WTC11 (cell line): ENCODE measurements at regions of chr19 and their contacts with region 1.

Region 1: DNA sequence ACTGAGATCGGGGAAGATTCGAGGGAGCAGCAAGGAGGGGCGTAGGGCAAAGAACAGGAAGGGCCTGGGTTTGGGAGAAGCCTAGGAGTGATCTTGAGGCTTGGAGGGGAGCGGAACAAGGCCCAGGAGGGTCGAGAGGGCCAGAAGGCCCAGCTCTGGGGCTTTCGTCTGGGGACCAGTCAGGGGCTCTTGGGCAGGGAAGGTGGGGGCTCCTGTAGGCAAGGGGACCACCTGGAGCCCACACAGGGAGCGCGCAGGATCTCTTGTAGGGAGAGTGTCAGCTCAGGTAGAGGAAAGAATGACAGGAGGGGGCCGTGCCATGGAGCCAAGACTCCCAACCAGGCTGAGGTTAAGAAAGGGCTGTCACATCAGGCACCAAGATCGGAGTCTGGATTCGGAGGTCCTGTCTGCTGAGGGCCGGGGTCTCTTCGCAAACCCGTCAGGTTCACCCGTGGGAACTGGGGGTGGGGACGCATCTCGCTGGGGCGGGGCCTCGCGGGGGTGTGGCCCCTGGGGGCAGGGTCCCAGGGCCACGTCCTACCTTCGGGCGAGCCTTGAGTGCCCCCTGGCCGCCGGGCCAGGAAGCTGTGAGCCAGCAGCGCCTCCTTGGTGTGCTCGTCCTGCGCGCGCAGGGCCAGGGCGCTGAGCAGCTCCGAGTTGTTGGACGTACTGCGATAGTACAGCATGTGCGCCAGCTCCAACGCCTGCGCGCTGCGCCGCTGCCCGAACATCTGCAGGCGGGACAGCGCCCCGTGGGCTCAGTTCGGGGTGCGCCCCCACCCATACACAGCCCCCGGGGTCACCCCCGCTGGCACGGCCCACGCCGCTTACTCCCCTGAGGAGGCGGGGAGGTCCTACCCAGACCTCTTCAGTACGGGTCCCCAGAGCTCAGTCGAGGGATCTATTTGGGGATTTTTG is 8.4 kb downstream of the EMP3 start:
- DNase-seq: peak; percentile 92
- ATAC-seq: peak; percentile 74
- H3K4me3 Mint-ChIP-seq: peak overlapping the region; percentile 84
- H3K27ac Mint-ChIP-seq: peak overlapping the region; percentile 97
- H3K4me1 Mint-ChIP-seq: peaks cover 30% of the 10 kb centered on the region
- H3K27me3 Mint-ChIP-seq: peaks cover 10% of the 10 kb centered on the region
- CTCF ChIP-seq: peak; percentile 29; the same call in 1 of the 2 replicates

Region 2: GRCh38 chr19:48271531-48272151 is 62.1 kb before region 1 on chr19:
- CTCF ChIA-PET with region 1: interaction called, 33 read pairs
- POLR2A ChIA-PET with region 1: interaction called, 3 read pairs
- DNase-seq: peak; percentile 68
- ATAC-seq: peak; percentile 76
- H3K4me3 Mint-ChIP-seq: peak overlapping the region; percentile 95
- H3K27ac Mint-ChIP-seq: peak overlapping the region; percentile 98
- H3K4me1 Mint-ChIP-seq: peaks cover 18% of the 10 kb centered on the region
- H3K27me3 Mint-ChIP-seq: no peaks in the 10 kb centered on the region; the same call in 1 of the 2 replicates
- CTCF ChIP-seq: no peak

Region 3: GRCh38 chr19:48308631-48309586 is 24.8 kb before region 1 on chr19:
- CTCF ChIA-PET with region 1: interaction called, 404 read pairs
- POLR2A ChIA-PET with region 1: no interaction called
- DNase-seq: peak; percentile 51
- ATAC-seq: peak; percentile 85
- H3K4me3 Mint-ChIP-seq: no peak overlapping the region
- H3K27ac Mint-ChIP-seq: no peak overlapping the region
- H3K4me1 Mint-ChIP-seq: peaks cover 8% of the 10 kb centered on the region
- H3K27me3 Mint-ChIP-seq: no peaks in the 10 kb centered on the region
- CTCF ChIP-seq: no peak

Region 4: GRCh38 chr19:48351341-48351752 is 17.6 kb after region 1 on chr19:
- CTCF ChIA-PET with region 1: interaction called, 36 read pairs
- POLR2A ChIA-PET with region 1: no interaction called
- DNase-seq: peak; percentile 90
- ATAC-seq: peak; percentile 90
- H3K4me3 Mint-ChIP-seq: no peak overlapping the region
- H3K27ac Mint-ChIP-seq: no peak overlapping the region
- H3K4me1 Mint-ChIP-seq: peaks cover 7% of the 10 kb centered on the region; the same call in 1 of the 2 replicates
- H3K27me3 Mint-ChIP-seq: no peaks in the 10 kb centered on the region; the same call in 1 of the 2 replicates
- CTCF ChIP-seq: peak; percentile 90

Region 5: DNA sequence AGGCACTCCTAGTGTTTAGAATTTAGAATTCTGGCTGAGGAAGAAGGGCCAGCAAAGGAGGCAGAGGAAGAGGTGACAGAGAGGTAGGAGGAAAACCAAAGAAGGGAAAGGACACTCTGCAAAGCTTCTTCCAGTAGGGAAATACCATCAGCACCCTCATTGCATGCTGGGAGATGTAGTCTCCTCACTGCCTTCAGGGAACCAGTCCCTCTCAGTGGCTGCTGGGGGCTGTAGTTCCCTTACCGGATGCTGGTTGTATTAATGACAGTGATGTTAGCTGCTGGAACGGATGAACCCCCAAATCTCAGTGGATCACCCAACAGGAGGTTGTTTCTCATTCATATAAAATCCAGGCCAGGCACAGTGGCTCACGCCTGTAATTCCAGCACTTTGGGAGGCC is 69.9 kb after region 1 on chr19:
- CTCF ChIA-PET with region 1: interaction called, 11 read pairs
- POLR2A ChIA-PET with region 1: interaction called, 3 read pairs
- DNase-seq: peak; percentile 71
- ATAC-seq: peak; percentile 33
- H3K4me3 Mint-ChIP-seq: no peak overlapping the region
- H3K27ac Mint-ChIP-seq: peak overlapping the region; percentile 96
- H3K4me1 Mint-ChIP-seq: peaks cover 56% of the 10 kb centered on the region
- H3K27me3 Mint-ChIP-seq: no peaks in the 10 kb centered on the region; the same call in 1 of the 2 replicates
- CTCF ChIP-seq: no peak

Region 6: DNA sequence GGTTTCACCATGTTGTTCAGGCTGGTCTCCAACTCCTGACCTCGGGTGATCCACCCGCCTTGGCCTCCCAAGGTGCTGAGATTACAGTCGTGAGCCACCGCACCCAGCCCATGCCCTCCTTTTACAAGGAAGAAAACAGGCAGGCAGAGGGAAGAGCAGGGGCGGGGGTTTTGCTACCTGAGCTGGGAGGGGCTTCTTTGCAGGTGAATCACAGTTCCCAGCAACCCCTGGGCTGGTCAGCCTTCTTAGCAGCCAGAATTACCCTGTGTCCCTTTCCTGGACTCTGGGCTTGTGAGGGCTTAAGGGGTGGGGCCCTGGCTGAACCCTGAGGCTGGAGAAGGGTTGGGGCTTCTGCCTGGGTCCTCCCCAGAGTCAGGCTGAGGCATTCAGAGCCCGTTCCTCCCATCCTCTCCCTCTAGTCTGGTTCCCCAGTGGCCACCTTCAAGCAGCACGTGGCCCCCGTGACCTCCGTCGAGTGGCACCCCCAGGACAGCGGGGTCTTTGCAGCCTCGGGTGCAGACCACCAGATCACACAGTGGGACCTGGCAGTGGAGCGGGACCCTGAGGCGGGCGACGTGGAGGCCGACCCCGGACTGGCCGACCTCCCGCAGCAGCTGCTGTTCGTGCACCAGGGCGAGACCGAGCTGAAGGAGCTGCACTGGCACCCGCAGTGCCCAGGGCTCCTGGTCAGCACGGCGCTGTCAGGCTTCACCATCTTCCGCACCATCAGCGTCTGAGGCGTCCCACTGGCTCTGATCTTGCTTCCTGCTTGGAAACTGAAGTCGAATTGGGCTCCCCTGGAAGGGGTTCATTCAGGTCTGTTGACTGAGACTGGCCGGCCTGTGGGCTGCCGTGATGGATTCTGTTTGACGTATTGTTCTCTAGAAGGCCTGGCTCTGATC is 118.8 kb after region 1 on chr19:
- CTCF ChIA-PET with region 1: no interaction called
- POLR2A ChIA-PET with region 1: no interaction called
- DNase-seq: no peak
- ATAC-seq: no peak
- H3K4me3 Mint-ChIP-seq: no peak overlapping the region
- H3K27ac Mint-ChIP-seq: no peak overlapping the region
- H3K4me1 Mint-ChIP-seq: no peaks in the 10 kb centered on the region
- H3K27me3 Mint-ChIP-seq: no peaks in the 10 kb centered on the region
- CTCF ChIP-seq: no peak